Right lobe of liver (tissue), 6 donors: ENCODE measurements at regions of chr2 and their contacts with region 1.

Region 1: DNA sequence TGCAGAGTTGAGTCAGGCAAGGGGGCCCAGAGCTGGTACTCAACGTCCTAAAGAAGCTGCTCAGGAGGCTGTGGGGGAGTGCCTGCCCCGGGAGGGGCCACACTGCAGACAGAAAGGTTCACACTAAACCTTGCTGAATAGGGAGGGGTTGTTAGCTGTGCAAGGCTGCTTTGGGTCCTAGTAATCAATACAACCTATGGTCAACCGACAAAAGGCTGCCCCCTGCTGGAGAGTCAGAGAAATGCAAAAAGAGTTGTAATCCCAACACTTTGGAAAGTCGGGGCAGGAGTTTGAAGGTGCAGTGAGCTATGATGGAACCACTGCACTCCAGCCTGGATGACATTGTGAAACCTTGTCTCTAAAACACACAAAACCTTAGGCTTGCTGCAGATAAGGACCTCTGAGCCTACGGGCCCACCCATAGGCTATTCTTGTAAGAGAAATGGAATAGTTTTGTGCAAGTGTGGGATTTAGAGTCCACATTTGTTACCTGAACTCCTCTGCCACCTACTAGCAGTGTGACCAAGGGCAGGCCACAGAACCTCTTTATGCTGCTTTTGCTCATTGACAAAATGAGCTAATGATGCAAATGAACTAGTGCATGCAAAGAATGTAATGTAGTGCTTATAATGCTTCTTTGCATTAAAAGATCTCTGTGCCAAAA is 81.5 kb downstream of the PRPF40A start:
- DNase-seq: peak; percentile 40 to 66 (median 57)
- ATAC-seq: peak; percentile 81 to 91 (median 88)
- H3K4me3 ChIP-seq: no peak overlapping the region
- H3K27ac ChIP-seq: no peak overlapping the region
- H3K4me1 ChIP-seq: no peaks in the 10 kb centered on the region
- H3K27me3 ChIP-seq: no peaks in the 10 kb centered on the region
- CTCF ChIP-seq: peak; percentile 77 to 86 (median 82)
- POLR2A ChIP-seq: no peak

Region 2: GRCh38 chr2:152036611-152037469 is 598.9 kb before region 1 on chr2:
- intact Hi-C with region 1: loop called in 1 of 2 experiments (anchors 10 kb)
- DNase-seq: peak in 2 of 3 donors; percentile 43 to 63
- ATAC-seq: peak; percentile 85 to 92 (median 88)
- H3K4me3 ChIP-seq: no peak overlapping the region
- H3K27ac ChIP-seq: no peak overlapping the region
- H3K4me1 ChIP-seq: no peaks in the 10 kb centered on the region
- H3K27me3 ChIP-seq: no peaks in the 10 kb centered on the region
- CTCF ChIP-seq: peak; percentile 70 to 83 (median 80)
- POLR2A ChIP-seq: no peak

Region 3: GRCh38 chr2:152189622-152190495 is 445.9 kb before region 1 on chr2:
- intact Hi-C with region 1: loop called (anchors 5 to 10 kb)
- DNase-seq: no peak
- ATAC-seq: peak; percentile 83 to 91 (median 83)
- H3K4me3 ChIP-seq: no peak overlapping the region
- H3K27ac ChIP-seq: no peak overlapping the region
- H3K4me1 ChIP-seq: no peaks in the 10 kb centered on the region
- H3K27me3 ChIP-seq: no peaks in the 10 kb centered on the region
- CTCF ChIP-seq: peak; percentile 73 to 80 (median 74)
- POLR2A ChIP-seq: no peak